Mammary epithelial cell (primary cell): ENCODE measurements at regions of chr1 and their contacts with region 1.

Region 1: DNA sequence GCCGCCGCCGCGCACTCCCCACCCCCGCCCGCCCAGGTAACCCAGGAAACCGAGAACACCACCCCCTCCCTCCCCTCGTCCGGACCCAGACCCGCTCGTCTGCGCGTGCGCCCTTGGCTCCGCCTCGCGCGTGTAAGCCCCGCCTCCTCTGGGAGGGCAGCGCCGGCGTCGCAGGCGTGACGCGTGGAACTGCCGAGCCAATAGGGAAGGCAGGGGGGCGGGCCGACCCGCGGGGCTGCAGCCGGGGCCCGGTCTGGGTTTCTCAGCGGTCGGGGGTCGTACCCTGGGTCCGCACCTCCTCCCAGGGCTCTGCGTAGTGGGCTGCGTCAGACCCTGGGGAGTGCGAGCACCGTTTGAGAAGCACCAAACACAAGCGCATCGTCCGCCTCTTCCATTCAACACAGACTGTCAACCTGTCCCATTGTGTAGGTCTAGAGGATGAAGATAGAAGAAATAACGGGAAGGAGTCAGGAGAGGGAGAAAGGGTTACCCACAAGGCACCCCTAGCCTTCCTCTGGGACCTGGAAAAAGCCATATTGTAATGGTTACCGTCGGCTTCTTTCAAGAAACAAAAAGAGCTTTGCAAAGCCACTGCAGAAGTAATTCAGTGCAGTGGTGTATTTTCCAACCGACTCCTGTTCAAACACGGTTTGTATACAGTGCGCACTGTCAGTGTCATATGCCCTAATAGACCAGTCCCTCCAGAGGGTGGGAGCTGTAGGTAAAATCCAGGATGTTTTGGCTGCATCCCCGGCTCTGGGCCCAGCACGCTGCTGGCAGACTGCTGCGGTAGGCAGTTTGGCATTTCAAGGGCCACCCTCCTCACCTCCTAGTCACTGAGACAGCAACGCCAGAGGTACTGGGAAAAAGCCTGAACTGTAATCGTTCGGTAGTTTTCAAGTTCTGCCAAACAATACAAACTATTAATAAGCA is 473 bp upstream of the LYST start:
- DNase-seq: peak; percentile 95
- H3K4me3 ChIP-seq: peak overlapping the region; percentile 92 to 94 (median 93)
- H3K27ac ChIP-seq: peak overlapping the region; percentile 45
- H3K4me1 ChIP-seq: peaks cover 25% of the 10 kb centered on the region
- H3K27me3 ChIP-seq: no peaks in the 10 kb centered on the region
- CTCF ChIP-seq: no peak

Region 2: GRCh38 chr1:235908742-235909520 is 41.8 kb after region 1 on chr1:
- CTCF ChIA-PET with region 1: no interaction called
- dilution Hi-C with region 1: no loop called
- in situ Hi-C with region 1: no loop called
- intact Hi-C with region 1: loop called (anchors 2 kb)
- DNase-seq: peak; percentile 99
- H3K4me3 ChIP-seq: peak overlapping the region; percentile 3 to 25 (median 24)
- H3K27ac ChIP-seq: peak overlapping the region; percentile 99
- H3K4me1 ChIP-seq: peaks cover 49% of the 10 kb centered on the region
- H3K27me3 ChIP-seq: no peaks in the 10 kb centered on the region
- CTCF ChIP-seq: peak in 1 of 2 donors; percentile 3

Region 3: GRCh38 chr1:235933017-235933765 is 66.0 kb after region 1 on chr1:
- CTCF ChIA-PET with region 1: no interaction called
- dilution Hi-C with region 1: loop called (anchors 5 kb)
- in situ Hi-C with region 1: no loop called
- intact Hi-C with region 1: loop called (anchors 1 kb)
- DNase-seq: peak; percentile 82
- H3K4me3 ChIP-seq: peak overlapping the region in 1 of 3 experiments; percentile 4
- H3K27ac ChIP-seq: peak overlapping the region; percentile 78
- H3K4me1 ChIP-seq: peaks cover 33% of the 10 kb centered on the region
- H3K27me3 ChIP-seq: no peaks in the 10 kb centered on the region
- CTCF ChIP-seq: peak; percentile 16 to 49

Region 4: DNA sequence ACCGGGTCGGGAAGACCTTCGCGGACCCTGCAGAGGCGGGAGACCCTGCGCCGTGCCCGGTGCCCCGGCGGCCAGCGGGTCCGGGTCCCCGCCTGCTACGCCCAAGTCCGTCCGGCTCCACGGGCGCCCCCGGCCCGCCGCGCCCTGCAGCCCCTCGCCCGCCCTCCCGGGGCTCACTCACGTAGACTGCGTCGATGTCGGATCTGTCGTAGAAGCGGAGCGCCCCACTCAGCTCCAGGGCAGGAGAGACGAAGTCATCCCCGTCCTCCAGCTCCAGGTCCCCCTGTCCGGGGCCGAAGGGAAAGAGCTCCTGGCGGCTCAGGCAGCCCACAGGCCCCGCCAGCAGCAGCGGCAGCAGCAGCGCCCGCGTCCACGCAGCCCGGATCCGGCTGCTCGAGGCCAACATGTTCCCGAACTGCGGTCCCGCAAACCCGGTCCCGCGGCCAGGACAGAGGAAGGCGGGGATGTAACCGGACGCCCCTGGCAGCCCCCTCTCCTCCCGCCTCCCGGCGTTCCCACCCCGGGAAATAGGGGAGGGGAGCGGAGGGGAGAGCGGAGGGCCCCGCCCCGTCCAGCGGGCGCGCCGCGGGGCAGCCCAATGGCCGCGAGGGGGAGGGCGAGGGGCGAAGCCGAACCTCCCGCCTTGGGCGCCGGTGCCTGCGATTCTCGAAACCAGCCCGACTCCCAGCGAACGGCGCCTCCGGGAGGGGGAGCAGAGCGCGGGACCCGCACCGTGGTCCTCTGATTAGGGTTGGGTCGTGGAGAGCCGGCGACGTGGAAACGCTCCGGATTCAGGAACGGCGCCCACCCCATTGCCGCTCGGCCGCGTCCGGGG is 197.7 kb after region 1 on chr1 and contains the start of gene NID1:
- CTCF ChIA-PET with region 1: no interaction called
- dilution Hi-C with region 1: no loop called
- in situ Hi-C with region 1: no loop called
- intact Hi-C with region 1: loop called (anchors 10 kb)
- DNase-seq: peak; percentile 42
- H3K4me3 ChIP-seq: peak within 1 kb of the TSS; percentile 54 to 72 (median 55)
- H3K27ac ChIP-seq: no peak within 1 kb of the TSS
- H3K4me1 ChIP-seq: peaks cover 15% of the 10 kb centered on the region
- H3K27me3 ChIP-seq: peaks cover 15% of the 10 kb centered on the region
- CTCF ChIP-seq: no peak
- total RNA-seq, gene NID1: 8.0 to 21.3 TPM